PC-9 (cell line): ENCODE measurements at regions of chr14 and their contacts with region 1.

Region 1: DNA sequence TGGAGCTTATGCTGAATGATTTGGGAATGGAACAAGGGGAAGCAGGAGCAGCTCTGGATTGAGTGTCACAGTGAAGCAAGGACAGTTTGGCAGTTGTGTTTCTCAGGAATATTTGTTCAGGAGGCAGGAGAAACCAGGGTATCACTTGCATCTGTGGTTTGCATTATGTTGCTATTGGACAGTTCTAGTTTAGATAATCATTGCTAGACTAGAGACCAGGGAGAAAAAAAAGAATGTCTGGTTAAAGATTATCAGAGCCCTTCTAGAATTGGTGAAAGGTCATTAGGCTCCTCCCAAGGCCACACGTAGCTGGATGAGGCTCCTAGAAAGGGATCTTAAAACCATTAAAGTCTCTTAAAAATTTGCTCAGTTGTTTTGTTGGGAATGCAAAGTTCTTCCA is 17.0 kb upstream of the SRSF5 start:
- DNase-seq: no peak
- H3K4me3 ChIP-seq: no peak overlapping the region
- H3K27ac ChIP-seq: no peak overlapping the region
- H3K4me1 ChIP-seq: no peaks in the 10 kb centered on the region
- H3K27me3 ChIP-seq: no peaks in the 10 kb centered on the region
- CTCF ChIP-seq: no peak

Region 2: GRCh38 chr14:69775012-69775411 is 25.1 kb after region 1 on chr14:
- CTCF ChIA-PET with region 1: no interaction called
- POLR2A ChIA-PET with region 1: interaction called, 20 read pairs
- intact Hi-C with region 1: no loop called
- DNase-seq: no peak
- H3K4me3 ChIP-seq: no peak overlapping the region
- H3K27ac ChIP-seq: no peak overlapping the region
- H3K4me1 ChIP-seq: no peaks in the 10 kb centered on the region
- H3K27me3 ChIP-seq: no peaks in the 10 kb centered on the region
- CTCF ChIP-seq: no peak

Region 3: DNA sequence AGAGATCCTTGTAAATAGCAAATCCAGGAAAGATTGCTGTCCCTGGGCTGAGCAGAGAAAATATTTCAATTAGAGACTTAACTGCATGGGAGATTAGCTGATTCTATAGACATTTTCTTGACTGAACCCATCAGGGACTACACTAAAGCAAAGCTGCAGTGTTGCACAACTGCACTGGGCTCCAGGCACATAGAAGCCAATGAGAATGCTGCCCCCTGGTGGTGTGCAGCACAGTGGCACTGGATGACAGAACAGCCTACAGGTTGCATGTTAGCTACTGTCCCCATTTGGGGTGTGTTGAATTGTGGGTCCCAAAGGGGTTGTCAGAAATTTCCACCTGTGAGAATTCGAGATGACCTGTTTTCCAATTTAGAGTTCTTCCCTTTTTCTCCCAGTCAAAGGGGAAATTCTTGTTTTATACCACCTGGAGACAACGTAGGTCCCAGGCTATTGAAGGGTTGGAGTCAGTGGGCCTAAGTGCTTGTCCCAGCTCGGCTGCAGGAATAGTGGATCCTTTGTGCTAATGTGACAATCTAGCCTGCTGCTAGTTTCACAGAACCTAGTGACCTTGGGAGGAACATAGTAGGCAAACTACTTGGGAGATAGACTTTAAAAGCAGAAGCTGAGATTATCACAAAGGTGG is 324.1 kb after region 1 on chr14:
- CTCF ChIA-PET with region 1: interaction called, 14 read pairs
- POLR2A ChIA-PET with region 1: no interaction called
- intact Hi-C with region 1: no loop called
- DNase-seq: peak; percentile 57 to 59
- H3K4me3 ChIP-seq: no peak overlapping the region
- H3K27ac ChIP-seq: no peak overlapping the region
- H3K4me1 ChIP-seq: no peaks in the 10 kb centered on the region
- H3K27me3 ChIP-seq: peaks cover 44% of the 10 kb centered on the region
- CTCF ChIP-seq: peak; percentile 93